ENCODE measurements at regions of chr15 and their contacts with region 1.

Region 1: DNA sequence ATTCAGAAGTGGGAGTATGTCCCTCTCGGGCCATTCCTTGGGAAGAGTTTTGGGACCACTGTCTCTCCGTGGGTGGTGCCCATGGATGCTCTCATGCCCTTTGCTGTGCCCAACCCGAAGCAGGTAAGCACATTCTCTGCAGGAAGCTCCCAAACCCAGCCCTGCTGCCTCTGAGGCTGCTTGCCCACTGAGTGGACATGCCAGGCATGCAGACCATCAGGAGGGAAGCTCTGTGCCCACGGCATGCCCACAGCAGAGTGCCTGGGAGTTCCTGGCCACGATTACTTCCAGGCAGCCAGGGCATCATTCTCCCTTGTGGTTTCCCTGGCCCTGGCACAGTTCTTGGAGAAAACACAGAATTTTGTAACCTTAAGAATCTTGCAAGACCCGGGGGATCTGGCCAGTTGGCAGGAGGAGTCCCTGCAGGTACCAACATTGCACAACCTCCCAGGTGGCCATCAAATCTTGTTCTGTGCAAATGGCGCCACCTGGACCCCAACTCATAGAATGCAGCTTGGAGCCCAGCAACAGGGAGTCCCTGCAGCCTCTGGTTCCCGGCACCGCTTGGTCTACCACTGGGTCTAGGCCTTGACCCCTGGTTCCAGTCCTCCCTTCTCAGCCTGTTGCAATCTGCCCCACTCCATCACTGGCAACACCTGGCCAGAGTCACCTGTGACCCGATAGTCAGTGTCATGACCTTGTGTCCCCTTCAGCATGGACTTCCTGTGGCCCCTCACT is 20.4 kb downstream of the FAH start:
- DNase-seq: peak; percentile 34 to 72 (median 47)
- H3K4me3 ChIP-seq: no peak overlapping the region
- H3K4me3 Mint-ChIP-seq: no peak overlapping the region
- H3K27ac ChIP-seq: no peak overlapping the region
- H3K27ac Mint-ChIP-seq: peak overlapping the region in 1 of 8 donors; percentile 60
- H3K4me1 ChIP-seq: no peaks in the 10 kb centered on the region
- H3K4me1 Mint-ChIP-seq: no peaks in the 10 kb centered on the region
- H3K27me3 ChIP-seq: no peaks in the 10 kb centered on the region
- H3K27me3 Mint-ChIP-seq: peaks cover 0 to 4% of the 10 kb centered on the region in 2 donors

Region 2: DNA sequence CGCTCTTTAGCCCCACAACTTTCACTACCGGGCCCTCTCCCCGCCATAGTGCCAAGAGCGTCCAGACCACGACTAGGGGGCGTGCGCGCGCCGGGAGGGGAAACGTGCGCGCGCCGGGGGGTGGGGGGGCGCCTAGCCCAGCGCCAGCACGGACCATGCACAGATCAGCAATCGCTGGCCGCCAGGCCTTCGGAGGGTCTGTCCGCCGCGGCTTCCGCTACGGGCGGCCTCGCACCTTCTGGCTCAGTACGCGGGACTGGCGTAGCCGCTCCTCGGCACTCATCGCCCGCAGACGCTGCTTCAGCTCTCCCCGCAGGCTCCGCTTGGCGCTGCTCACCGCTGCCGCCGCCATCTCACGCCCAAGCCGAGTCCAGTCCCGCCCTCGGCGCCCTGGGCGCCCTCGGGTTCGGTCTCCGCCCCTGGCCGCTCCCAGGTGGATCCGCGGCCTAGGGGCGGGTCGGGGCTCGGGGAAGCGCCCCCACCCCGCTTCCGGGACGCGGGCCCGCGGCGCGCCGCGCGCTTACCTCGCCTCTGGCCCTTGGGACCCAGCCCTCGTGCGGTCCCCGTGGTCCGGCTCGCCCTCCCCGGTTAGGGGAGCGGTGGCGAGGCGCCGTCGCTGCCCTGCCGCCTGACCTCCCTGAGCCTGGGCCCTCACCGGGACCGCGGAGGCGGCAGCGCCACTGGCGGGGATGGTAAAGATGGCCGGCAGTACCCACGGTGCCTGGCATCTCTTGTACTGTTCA is 276.4 kb before region 1 on chr15 and contains the start of gene MTHFS:
- CTCF ChIA-PET with region 1: no interaction called
- POLR2A ChIA-PET with region 1: no interaction called
- DNase-seq: peak; percentile 62 to 87 (median 83)
- H3K4me3 ChIP-seq: peak within 1 kb of the TSS; percentile 66
- H3K4me3 Mint-ChIP-seq: peak within 1 kb of the TSS; percentile 94 to 100 (median 98)
- H3K27ac ChIP-seq: peak within 1 kb of the TSS; percentile 93
- H3K27ac Mint-ChIP-seq: peak within 1 kb of the TSS; percentile 95 to 100 (median 100)
- H3K4me1 ChIP-seq: peaks cover 29% of the 10 kb centered on the region
- H3K4me1 Mint-ChIP-seq: peaks cover 35 to 46% (median 40%) of the 10 kb centered on the region in 3 donors
- H3K27me3 ChIP-seq: no peaks in the 10 kb centered on the region
- H3K27me3 Mint-ChIP-seq: no peaks in the 10 kb centered on the region
- total RNA-seq, gene MTHFS: 30.2 to 31.1 TPM

Region 3: DNA sequence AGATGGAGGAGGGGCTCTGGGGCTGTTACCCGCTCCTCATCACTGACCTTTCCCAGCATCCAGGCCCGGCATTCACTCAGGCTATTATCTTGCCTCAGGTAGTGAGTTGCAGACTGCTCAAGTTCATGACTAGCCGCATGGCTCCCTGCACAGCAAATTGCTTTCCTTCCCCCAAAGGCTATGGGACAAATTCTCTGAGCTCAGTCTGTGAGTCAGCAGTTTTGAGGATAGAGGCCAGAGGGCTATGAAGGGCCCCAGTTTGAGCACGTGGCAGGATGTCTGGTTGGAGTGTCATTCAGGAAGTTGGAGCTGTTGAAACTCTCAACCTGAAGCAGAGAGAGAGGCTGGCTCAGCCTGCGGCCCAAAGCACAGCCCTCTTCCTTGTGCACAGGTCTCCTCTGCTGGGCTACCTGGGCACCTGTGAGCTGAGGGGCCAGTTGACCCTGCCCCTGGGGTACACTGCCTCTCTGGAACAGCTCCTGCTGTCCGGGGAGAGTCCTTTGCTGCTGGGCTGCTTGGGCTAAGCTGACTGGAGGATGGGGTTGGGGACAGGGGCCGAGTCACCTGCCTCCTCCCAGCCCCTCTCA is 12.5 kb before region 1 on chr15:
- CTCF ChIA-PET with region 1: interaction called, 11 read pairs
- POLR2A ChIA-PET with region 1: no interaction called
- DNase-seq: peak in 1 of 5 donors; percentile 48
- H3K4me3 ChIP-seq: no peak overlapping the region
- H3K4me3 Mint-ChIP-seq: no peak overlapping the region
- H3K27ac ChIP-seq: peak overlapping the region; percentile 51
- H3K27ac Mint-ChIP-seq: peak overlapping the region in 6 of 8 donors; percentile 45 to 93 (median 58)
- H3K4me1 ChIP-seq: peaks cover 12% of the 10 kb centered on the region
- H3K4me1 Mint-ChIP-seq: peaks cover 2 to 19% (median 19%) of the 10 kb centered on the region in 3 donors
- H3K27me3 ChIP-seq: no peaks in the 10 kb centered on the region
- H3K27me3 Mint-ChIP-seq: peaks cover 0 to 1% of the 10 kb centered on the region in 2 donors